Heart left ventricle (tissue), 16 donors: ENCODE measurements at regions of chr6 and their contacts with region 1.

Region 1: DNA sequence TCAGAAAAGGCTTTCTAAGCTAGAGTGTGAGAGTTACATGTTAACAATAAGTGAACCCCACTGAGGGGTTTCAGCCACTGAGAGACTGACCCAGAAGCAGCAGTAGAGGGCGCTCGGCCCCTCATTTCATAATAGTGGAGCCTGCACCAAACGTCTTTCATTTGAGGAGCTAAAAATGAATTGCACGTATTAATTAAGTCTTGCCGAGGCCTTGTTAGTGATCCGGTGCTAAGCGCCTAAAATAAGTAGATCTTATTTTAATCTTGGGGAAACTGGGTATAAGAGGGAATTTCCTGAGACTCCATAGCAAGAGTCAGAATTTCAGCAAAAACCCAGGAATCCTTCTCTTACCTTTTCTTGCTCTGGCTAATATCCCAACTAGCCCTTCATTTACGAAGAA is 209.7 kb downstream of the FARS2 start:
- DNase-seq: peak; percentile 45 to 65 (median 60)
- ATAC-seq: peak; percentile 75 to 87 (median 86)
- H3K4me3 ChIP-seq: no peak overlapping the region
- H3K27ac ChIP-seq: peak overlapping the region in 1 of 12 donors; percentile 28
- H3K4me1 ChIP-seq: peaks cover 0 to 16% (median 9%) of the 10 kb centered on the region in 12 donors
- H3K27me3 ChIP-seq: no peaks in the 10 kb centered on the region
- CTCF ChIP-seq: peak; percentile 68 to 94 (median 86)
- POLR2A ChIP-seq: no peak

Region 2: GRCh38 chr6:5343998-5344397 is 127.0 kb before region 1 on chr6:
- intact Hi-C with region 1: no loop called
- DNase-seq: peak in 1 of 5 donors; percentile 20
- ATAC-seq: peak in 3 of 4 donors; percentile 10 to 94 (median 51)
- H3K4me3 ChIP-seq: no peak overlapping the region
- H3K27ac ChIP-seq: peak overlapping the region in 2 of 12 donors; percentile 9 to 13
- H3K4me1 ChIP-seq: peaks cover 0 to 20% (median 6%) of the 10 kb centered on the region in 12 donors
- H3K27me3 ChIP-seq: no peaks in the 10 kb centered on the region
- CTCF ChIP-seq: no peak
- POLR2A ChIP-seq: no peak

Region 3: GRCh38 chr6:5764401-5764955 is 293.4 kb after region 1 on chr6:
- intact Hi-C with region 1: loop called in 7 of 10 experiments (anchors 1 to 10 kb)
- DNase-seq: peak in 4 of 5 donors; percentile 69 to 85 (median 78)
- ATAC-seq: peak; percentile 91 to 92 (median 92)
- H3K4me3 ChIP-seq: peak overlapping the region in 2 of 12 donors; percentile 21 to 24
- H3K27ac ChIP-seq: peak overlapping the region; percentile 67 to 94 (median 84)
- H3K4me1 ChIP-seq: peaks cover 0 to 53% (median 25%) of the 10 kb centered on the region in 12 donors
- H3K27me3 ChIP-seq: no peaks in the 10 kb centered on the region
- CTCF ChIP-seq: peak in 3 of 12 donors; percentile 4 to 25 (median 20)
- POLR2A ChIP-seq: no peak

Region 4: DNA sequence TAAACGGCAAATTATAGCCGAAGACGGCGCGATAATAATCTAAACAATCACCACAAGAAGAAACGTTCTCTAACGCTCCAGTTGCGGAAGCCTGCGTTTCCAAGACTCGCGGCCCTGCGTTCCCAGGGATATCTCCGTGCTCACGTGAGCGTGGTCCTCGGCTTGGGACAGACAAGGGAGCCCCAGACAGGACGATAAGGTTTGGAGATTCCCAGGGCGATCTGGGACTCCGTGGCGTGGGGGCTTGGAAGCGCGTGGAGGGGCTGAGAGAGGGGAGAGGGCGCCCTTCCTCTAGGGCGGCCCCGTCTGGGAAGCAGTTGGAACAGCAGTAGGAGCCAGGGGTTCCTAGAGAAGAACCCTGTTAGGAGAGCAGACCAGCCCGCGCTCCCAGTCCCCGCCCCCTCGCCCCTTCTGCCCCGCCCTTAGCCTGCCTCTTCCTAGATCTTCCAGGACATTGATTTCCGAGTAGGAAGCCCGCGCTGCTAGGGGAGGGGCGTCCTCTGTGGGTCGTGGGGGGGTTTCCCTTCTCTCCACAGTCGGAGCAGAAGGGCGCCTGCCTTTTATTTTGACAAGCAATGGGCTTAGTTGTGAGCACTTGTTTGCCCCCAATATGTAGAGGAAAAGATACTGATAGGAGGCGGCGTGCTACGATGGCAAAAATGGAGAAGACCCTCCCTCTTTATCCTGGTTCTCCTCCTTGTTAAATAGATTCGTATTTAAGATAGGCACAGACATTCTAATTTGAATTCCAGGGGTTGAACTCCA is 525.1 kb after region 1 on chr6:
- intact Hi-C with region 1: loop called in 6 of 10 experiments (anchors 5 to 10 kb)
- DNase-seq: peak; percentile 75 to 83 (median 81)
- ATAC-seq: peak; percentile 70 to 88 (median 84)
- H3K4me3 ChIP-seq: peak overlapping the region; percentile 34 to 71 (median 56)
- H3K27ac ChIP-seq: peak overlapping the region; percentile 57 to 91 (median 79)
- H3K4me1 ChIP-seq: peaks cover 0 to 60% (median 31%) of the 10 kb centered on the region in 12 donors
- H3K27me3 ChIP-seq: peaks cover 47 to 96% (median 82%) of the 10 kb centered on the region in 9 donors
- CTCF ChIP-seq: peak in 9 of 12 donors; percentile 7 to 54 (median 28)
- POLR2A ChIP-seq: no peak

Region 5: DNA sequence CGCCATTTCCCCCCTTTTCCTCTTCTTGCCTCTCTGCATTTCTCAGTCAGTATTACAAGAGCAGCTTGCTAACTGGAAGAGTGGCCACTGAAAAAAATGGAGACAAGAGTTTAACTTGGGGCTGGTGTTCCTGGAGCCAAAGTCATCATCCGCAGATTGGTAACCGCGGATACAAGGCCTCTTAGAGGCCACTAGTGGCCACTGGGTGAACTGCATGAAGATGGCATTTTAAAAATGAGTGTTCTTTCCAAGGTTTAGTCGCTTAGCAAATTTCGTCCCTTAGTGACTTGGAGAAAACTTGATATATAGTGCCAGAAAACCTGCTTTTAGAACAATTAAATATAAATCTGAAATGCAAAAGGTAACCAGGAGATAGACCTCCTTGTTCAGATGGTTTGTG is 844.6 kb after region 1 on chr6:
- intact Hi-C with region 1: loop called in 1 of 10 experiments (anchors 10 kb)
- DNase-seq: peak in 2 of 5 donors; percentile 24 to 43
- ATAC-seq: peak in 1 of 4 donors; percentile 40
- H3K4me3 ChIP-seq: peak overlapping the region in 3 of 12 donors; percentile 8 to 62 (median 13)
- H3K27ac ChIP-seq: peak overlapping the region in 1 of 12 donors; percentile 74
- H3K4me1 ChIP-seq: peaks cover 0 to 44% (median 11%) of the 10 kb centered on the region in 12 donors
- H3K27me3 ChIP-seq: peaks cover 0 to 13% (median 8%) of the 10 kb centered on the region in 9 donors
- CTCF ChIP-seq: peak; percentile 78 to 94 (median 87)
- POLR2A ChIP-seq: no peak